ENCODE measurements at regions of chr10 and their contacts with region 1.

Region 1: DNA sequence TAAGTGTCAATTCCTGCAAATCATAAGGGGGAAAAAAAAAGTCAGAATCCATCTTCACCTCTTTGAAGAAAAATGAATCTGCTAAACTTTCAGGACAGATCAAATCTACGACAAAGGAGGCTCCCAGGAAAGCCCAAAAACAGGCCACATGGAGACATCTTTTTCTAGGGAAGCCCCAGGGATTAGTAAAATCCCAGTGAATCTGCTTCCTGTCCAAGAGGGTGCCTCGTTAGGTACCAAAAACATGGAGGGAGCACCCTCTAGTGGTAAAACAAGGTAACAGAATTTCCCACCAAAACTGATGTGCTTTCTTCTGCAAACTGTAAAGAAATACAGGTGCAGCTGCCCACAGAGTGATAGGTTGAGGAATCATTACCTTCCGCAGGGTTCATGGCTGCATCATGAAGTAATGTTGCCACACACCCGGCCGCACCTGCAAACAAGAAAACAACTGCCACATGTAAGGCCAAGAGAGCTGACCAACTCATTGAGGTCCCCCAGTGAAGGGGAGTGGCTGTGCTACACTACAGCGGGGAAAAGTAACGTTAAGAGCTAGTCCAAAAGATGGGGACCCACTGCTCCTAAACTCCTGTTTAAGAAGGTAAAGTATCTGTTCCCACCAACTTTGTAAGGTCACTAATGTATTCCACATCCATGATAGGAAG is 7.9 kb downstream of the SLC25A28 start:
- DNase-seq: peak in 8 of 9 donors; percentile 24 to 60 (median 48)
- ATAC-seq: peak; percentile 81
- H3K4me3 ChIP-seq: no peak overlapping the region
- H3K4me3 Mint-ChIP-seq: no peak overlapping the region
- H3K27ac ChIP-seq: peak overlapping the region; percentile 14
- H3K27ac Mint-ChIP-seq: peak overlapping the region in 8 of 9 donors; percentile 34 to 83 (median 64)
- H3K4me1 ChIP-seq: peaks cover 3 to 7% of the 10 kb centered on the region in 2 donors
- H3K4me1 Mint-ChIP-seq: peaks cover 14 to 33% (median 27%) of the 10 kb centered on the region in 7 donors
- H3K27me3 ChIP-seq: no peaks in the 10 kb centered on the region
- H3K27me3 Mint-ChIP-seq: no peaks in the 10 kb centered on the region

Region 2: GRCh38 chr10:98720551-98720950 is 891.7 kb before region 1 on chr10:
- CTCF ChIA-PET with region 1: no interaction called
- POLR2A ChIA-PET with region 1: no interaction called
- intact Hi-C with region 1: no loop called
- DNase-seq: no peak
- ATAC-seq: no peak
- H3K4me3 ChIP-seq: no peak overlapping the region
- H3K4me3 Mint-ChIP-seq: no peak overlapping the region
- H3K27ac ChIP-seq: no peak overlapping the region
- H3K27ac Mint-ChIP-seq: no peak overlapping the region
- H3K4me1 ChIP-seq: no peaks in the 10 kb centered on the region
- H3K4me1 Mint-ChIP-seq: no peaks in the 10 kb centered on the region
- H3K27me3 ChIP-seq: no peaks in the 10 kb centered on the region
- H3K27me3 Mint-ChIP-seq: peaks cover 0 to 11% (median 8%) of the 10 kb centered on the region in 5 donors

Region 3: GRCh38 chr10:99395750-99396445 is 216.4 kb before region 1 on chr10:
- CTCF ChIA-PET with region 1: interaction called, 4 read pairs
- POLR2A ChIA-PET with region 1: no interaction called
- intact Hi-C with region 1: loop called (anchors 1 kb)
- DNase-seq: no peak
- ATAC-seq: no peak
- H3K4me3 ChIP-seq: no peak overlapping the region
- H3K4me3 Mint-ChIP-seq: no peak overlapping the region
- H3K27ac ChIP-seq: peak overlapping the region; percentile 39
- H3K27ac Mint-ChIP-seq: peak overlapping the region in 7 of 9 donors; percentile 7 to 74 (median 60)
- H3K4me1 ChIP-seq: no peaks in the 10 kb centered on the region
- H3K4me1 Mint-ChIP-seq: peaks cover 0 to 15% (median 9%) of the 10 kb centered on the region in 7 donors
- H3K27me3 ChIP-seq: no peaks in the 10 kb centered on the region
- H3K27me3 Mint-ChIP-seq: no peaks in the 10 kb centered on the region

Region 4: GRCh38 chr10:99435986-99436638 is 176.2 kb before region 1 on chr10:
- CTCF ChIA-PET with region 1: interaction called, 17 read pairs
- POLR2A ChIA-PET with region 1: no interaction called
- intact Hi-C with region 1: loop called in 1 of 2 experiments (anchors 1 kb)
- DNase-seq: peak in 6 of 9 donors; percentile 11 to 51 (median 28)
- ATAC-seq: peak; percentile 73
- H3K4me3 ChIP-seq: no peak overlapping the region
- H3K4me3 Mint-ChIP-seq: no peak overlapping the region
- H3K27ac ChIP-seq: no peak overlapping the region
- H3K27ac Mint-ChIP-seq: peak overlapping the region in 1 of 9 donors; percentile 40
- H3K4me1 ChIP-seq: no peaks in the 10 kb centered on the region
- H3K4me1 Mint-ChIP-seq: peaks cover 13 to 37% (median 25%) of the 10 kb centered on the region in 7 donors
- H3K27me3 ChIP-seq: no peaks in the 10 kb centered on the region
- H3K27me3 Mint-ChIP-seq: no peaks in the 10 kb centered on the region

Region 5: DNA sequence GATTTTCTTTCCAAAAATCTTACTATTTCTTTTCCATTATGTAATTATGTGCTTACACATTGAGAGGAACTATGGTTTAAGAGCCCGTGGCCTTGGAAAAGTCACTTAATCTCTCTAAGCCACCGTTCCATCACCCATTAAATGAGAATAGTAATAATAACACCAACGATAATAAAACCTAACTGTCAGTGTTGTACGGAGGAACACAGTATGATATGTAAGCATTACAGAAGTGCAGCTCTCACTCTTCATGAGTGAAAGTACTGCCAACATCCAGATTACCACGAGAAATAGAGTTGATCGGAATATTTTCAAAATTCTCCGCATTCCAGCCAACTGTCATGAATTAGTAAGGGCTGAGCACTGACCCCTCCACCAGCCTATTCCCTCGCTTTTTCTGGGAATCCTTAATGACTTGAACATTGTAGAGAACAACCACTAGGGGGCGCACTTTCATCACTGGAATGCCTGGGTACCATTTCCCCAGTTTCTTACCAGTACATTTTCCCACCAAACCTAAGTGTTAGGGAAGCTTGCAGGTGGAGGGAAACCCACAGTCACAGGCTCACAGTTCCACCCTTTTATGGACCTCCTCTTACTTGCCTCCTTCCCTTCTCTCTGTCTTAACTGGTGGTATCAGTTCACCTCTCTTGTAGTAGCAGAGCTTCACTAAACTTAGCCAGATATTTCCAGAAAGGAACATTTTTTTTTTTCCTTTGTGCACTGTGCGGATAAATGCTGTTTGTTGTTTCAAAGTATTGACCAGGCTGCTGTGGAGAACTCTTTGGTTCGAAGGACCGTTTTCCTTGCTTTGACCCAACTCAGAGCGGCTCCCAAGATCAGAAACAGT is 51.8 kb before region 1 on chr10:
- CTCF ChIA-PET with region 1: interaction called, 3 read pairs
- POLR2A ChIA-PET with region 1: no interaction called
- intact Hi-C with region 1: loop called (anchors 1 kb)
- DNase-seq: peak in 6 of 9 donors; percentile 9 to 35 (median 27)
- ATAC-seq: peak; percentile 41
- H3K4me3 ChIP-seq: no peak overlapping the region
- H3K4me3 Mint-ChIP-seq: no peak overlapping the region
- H3K27ac ChIP-seq: no peak overlapping the region
- H3K27ac Mint-ChIP-seq: peak overlapping the region in 1 of 9 donors; percentile 28
- H3K4me1 ChIP-seq: peaks cover 0 to 7% of the 10 kb centered on the region in 2 donors
- H3K4me1 Mint-ChIP-seq: peaks cover 0 to 8% (median 0%) of the 10 kb centered on the region in 7 donors
- H3K27me3 ChIP-seq: no peaks in the 10 kb centered on the region
- H3K27me3 Mint-ChIP-seq: peaks cover 15 to 36% (median 32%) of the 10 kb centered on the region in 5 donors

Region 6: GRCh38 chr10:99983280-99983988 is 371.1 kb after region 1 on chr10:
- CTCF ChIA-PET with region 1: no interaction called
- POLR2A ChIA-PET with region 1: no interaction called
- intact Hi-C with region 1: no loop called
- DNase-seq: no peak
- ATAC-seq: no peak
- H3K4me3 ChIP-seq: no peak overlapping the region
- H3K4me3 Mint-ChIP-seq: no peak overlapping the region
- H3K27ac ChIP-seq: no peak overlapping the region
- H3K27ac Mint-ChIP-seq: peak overlapping the region in 1 of 9 donors; percentile 51
- H3K4me1 ChIP-seq: no peaks in the 10 kb centered on the region
- H3K4me1 Mint-ChIP-seq: peaks cover 0 to 7% (median 4%) of the 10 kb centered on the region in 7 donors
- H3K27me3 ChIP-seq: no peaks in the 10 kb centered on the region
- H3K27me3 Mint-ChIP-seq: no peaks in the 10 kb centered on the region